ENCODE measurements at regions of chr10 and their contacts with region 1.

Region 1: GRCh38 chr10:97292097-97292862 is at the start of gene ARHGAP19:
- DNase-seq: peak; percentile 99
- ATAC-seq: peak; percentile 93
- H3K4me3 ChIP-seq: peak within 1 kb of the TSS; percentile 61 to 82 (median 69)
- H3K27ac ChIP-seq: peak within 1 kb of the TSS; percentile 97
- H3K4me1 ChIP-seq: peaks cover 30% of the 10 kb centered on the region
- H3K27me3 ChIP-seq: no peaks in the 10 kb centered on the region
- CTCF ChIP-seq: peak; percentile 61
- EP300 ChIP-seq: 0 out of 4 replicates have a peak, but pooled peaks of 1 of the 2 experiments have one; percentile 9
- POLR2A ChIP-seq: peak; percentile 85 to 89
- RAD21 ChIP-seq: peak; percentile 76
- total RNA-seq, gene ARHGAP19: 10.0 and 15.6 TPM in 2 replicates

Region 2: DNA sequence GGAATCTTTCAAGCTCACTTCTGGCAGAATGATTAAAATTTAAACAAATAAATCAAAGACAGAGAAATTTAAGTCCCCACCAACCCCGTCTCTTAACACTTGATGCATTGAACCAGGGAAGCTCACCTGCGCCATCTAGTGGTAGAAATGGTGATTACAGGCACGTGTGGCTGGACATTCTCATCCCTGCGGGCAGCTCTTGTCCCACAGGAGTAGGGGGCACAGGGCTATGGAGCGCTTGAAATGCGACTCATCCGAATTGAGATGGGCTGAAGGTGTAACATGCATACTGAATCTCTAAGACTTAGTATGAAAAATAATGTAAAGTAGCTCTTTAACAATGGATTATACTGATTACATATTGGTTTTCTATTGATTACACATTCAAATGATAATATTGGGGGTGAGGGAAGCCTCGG is 81.7 kb before region 1 on chr10:
- CTCF ChIA-PET with region 1: no interaction called
- POLR2A ChIA-PET with region 1: no interaction called
- in situ Hi-C with region 1: no loop called
- intact Hi-C with region 1: no loop called
- DNase-seq: peak; percentile 61
- ATAC-seq: peak; percentile 80
- H3K4me3 ChIP-seq: no peak overlapping the region
- H3K27ac ChIP-seq: no peak overlapping the region
- H3K4me1 ChIP-seq: peaks cover 8% of the 10 kb centered on the region
- H3K27me3 ChIP-seq: peaks cover 0 to 5% of the 10 kb centered on the region in 2 experiments; a peak in 2 of 5 replicates
- CTCF ChIP-seq: peak; percentile 89
- EP300 ChIP-seq: no peak
- POLR2A ChIP-seq: no peak
- RAD21 ChIP-seq: peak; percentile 84

Region 3: DNA sequence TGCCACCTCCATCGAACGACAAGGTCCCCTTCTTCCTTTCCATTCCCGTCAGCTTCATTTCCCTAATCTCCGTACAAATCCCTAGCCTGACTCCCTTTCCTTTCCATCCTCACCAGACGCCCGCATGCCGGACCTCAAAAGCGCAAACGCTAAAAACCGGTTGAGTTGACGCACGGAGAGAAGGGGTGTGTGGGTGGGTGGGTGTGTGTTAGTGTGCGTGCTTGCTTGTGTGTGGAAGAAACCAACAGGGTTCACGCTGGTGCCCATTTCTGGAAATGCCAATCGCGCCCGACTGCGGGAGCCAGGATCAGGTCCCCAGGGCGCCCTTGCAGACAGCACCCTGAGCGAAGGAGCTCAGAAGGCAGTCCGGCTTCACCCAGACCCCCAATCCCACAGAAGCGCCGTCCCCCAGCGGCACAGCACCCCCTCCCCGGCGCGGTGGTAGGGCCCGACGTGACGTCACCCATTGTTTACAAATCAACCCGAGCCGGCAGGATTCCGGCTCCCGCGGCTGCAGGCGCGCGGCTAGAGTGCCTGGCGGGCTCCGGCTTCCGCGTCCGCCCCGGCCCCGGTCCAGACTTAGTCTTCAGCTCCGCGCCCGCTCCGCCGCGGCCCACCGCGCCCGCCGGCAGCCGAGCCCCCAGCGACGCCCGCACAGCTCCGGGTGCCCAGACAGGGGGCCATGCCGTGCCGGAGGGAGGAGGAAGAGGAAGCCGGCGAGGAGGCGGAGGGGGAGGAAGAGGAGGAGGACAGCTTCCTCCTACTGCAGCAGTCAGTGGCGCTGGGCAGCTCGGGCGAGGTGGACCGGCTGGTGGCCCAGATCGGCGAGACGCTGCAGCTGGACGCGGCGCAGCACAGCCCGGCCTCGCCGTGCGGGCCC is 26.7 kb after region 1 on chr10 and contains the start of gene FRAT1:
- CTCF ChIA-PET with region 1: no interaction called
- POLR2A ChIA-PET with region 1: interaction called, 12 read pairs
- in situ Hi-C with region 1: no loop called
- intact Hi-C with region 1: no loop called
- DNase-seq: peak; percentile 74
- ATAC-seq: peak; percentile 82
- H3K4me3 ChIP-seq: peak within 1 kb of the TSS; percentile 75 to 84 (median 82)
- H3K27ac ChIP-seq: peak within 1 kb of the TSS; percentile 97
- H3K4me1 ChIP-seq: peaks cover 48% of the 10 kb centered on the region
- H3K27me3 ChIP-seq: peaks cover 0 to 2% of the 10 kb centered on the region in 2 experiments; a peak in 2 of 5 replicates
- CTCF ChIP-seq: no peak
- EP300 ChIP-seq: no peak; a peak in 1 of 4 replicates
- POLR2A ChIP-seq: peak; percentile 49 to 62; a peak in 3 of 4 replicates
- RAD21 ChIP-seq: peak; percentile 51
- total RNA-seq, gene FRAT1: 1.3 and 2.3 TPM in 2 replicates

Region 4: DNA sequence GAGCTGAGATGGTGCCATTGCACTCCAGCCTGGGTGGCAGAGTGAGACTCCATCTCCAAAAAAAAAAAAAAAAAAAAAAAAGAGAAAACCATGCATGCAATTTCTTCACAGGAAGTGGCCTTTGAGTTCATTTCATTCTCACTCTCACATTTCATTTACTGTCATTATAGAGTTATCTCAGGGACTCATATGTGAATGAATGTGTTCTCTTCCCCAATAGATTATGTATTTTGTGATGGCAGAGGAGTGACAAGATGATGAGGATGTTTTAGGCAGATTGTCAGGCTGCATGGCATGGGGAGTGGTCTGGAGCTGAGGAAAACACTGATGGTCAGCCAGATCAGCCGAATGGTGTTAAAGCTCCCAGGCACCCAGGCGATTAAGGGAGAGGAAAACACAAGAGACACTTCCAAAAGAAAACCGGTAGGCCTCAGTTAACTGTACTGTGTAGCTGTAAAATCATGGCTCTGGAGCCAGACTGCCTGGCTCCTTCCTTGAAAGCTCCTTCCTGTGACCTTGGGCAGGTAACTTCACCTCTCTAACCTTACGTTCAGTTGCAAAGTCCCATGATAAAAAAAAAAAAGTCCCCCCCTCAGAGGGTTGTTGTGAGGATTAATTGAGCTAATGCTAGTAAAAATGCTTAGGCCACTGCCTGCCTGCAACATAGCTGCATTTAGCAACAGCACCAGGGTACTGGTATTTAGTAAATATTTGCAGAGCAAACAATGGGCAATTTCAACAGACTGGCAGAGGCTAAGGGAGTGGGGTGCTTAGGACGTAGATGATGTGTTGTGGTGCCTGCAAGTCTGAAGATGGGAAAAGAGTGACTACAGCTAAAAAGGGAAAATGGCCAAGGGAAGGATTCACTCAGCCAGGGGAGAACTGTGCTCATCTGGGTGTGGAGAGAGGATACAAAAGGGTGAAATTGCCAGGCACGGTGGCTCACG is 35.3 kb after region 1 on chr10:
- CTCF ChIA-PET with region 1: interaction called, 5 read pairs
- POLR2A ChIA-PET with region 1: interaction called, 27 read pairs
- in situ Hi-C with region 1: loop called (anchors 5 kb)
- intact Hi-C with region 1: loop called (anchors 2 kb)
- DNase-seq: peak; percentile 96
- ATAC-seq: peak; percentile 87
- H3K4me3 ChIP-seq: peak overlapping the region in 1 of 3 experiments; percentile 59; a peak in 2 of 6 replicates
- H3K27ac ChIP-seq: peak overlapping the region; percentile 91
- H3K4me1 ChIP-seq: peaks cover 74% of the 10 kb centered on the region
- H3K27me3 ChIP-seq: no peaks in the 10 kb centered on the region
- CTCF ChIP-seq: no peak
- EP300 ChIP-seq: peak; percentile 84 to 96
- POLR2A ChIP-seq: no peak
- RAD21 ChIP-seq: peak; percentile 20; the same call in 1 of the 2 replicates

Region 5: DNA sequence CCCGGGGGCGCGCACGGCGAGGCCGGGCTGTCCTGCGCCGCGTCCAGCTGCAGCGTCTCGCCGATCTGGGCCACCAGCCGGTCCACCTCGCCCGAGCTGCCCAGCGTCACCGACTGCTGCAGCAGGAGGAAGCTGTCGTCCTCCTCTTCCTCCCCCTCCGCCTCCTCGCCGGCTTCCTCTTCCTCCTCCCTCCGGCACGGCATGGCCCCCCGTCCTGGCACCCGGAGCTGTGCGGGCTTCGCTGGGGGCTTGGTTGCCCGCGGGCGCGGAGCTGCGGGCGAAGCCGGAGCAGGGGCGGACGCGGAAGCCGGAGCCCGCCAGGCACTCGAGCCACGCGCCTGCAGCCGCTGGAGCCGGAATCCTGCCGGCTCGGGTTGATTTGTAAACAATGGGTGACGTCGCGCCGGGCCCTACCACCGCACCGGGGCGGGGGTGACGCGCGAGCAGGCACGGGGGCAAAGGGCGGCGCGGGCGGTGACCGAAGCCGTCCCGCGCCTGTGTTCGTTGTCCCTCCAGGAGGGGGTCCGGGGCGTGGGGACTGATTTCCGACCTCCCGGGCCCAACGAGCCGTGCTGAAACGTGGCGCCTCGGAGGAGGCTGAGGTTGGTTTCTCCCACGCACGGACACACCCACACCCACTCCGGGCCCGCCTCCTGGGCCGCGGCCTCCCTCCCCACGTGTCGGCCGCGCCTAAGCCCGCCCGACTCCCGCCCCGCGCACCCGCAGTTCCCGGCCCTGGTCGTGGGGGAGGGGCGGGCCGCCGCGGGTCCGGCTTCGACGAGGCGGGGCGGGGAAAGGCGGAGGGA is 42.3 kb after region 1 on chr10 and contains the start of gene FRAT2:
- CTCF ChIA-PET with region 1: interaction called, 5 read pairs
- POLR2A ChIA-PET with region 1: interaction called, 27 read pairs
- in situ Hi-C with region 1: loop called (anchors 5 kb)
- intact Hi-C with region 1: loop called (anchors 1 kb)
- DNase-seq: peak; percentile 74
- ATAC-seq: peak; percentile 76
- H3K4me3 ChIP-seq: peak within 1 kb of the TSS; percentile 65 to 87 (median 82)
- H3K27ac ChIP-seq: peak within 1 kb of the TSS; percentile 85
- H3K4me1 ChIP-seq: peaks cover 52% of the 10 kb centered on the region
- H3K27me3 ChIP-seq: no peaks in the 10 kb centered on the region
- CTCF ChIP-seq: no peak
- EP300 ChIP-seq: peak; percentile 39 to 53; a peak in 1 of 4 replicates
- POLR2A ChIP-seq: peak; percentile 80 to 86
- RAD21 ChIP-seq: peak; percentile 66
- total RNA-seq, gene FRAT2: 10.1 and 14.1 TPM in 2 replicates

Region 6: GRCh38 chr10:97400665-97401454 is 108.6 kb after region 1 on chr10 and contains the start of gene RRP12:
- CTCF ChIA-PET with region 1: no interaction called
- POLR2A ChIA-PET with region 1: interaction called, 13 read pairs
- in situ Hi-C with region 1: no loop called
- intact Hi-C with region 1: loop called (anchors 5 kb)
- DNase-seq: peak; percentile 99
- ATAC-seq: peak; percentile 92
- H3K4me3 ChIP-seq: peak within 1 kb of the TSS; percentile 72 to 92 (median 87)
- H3K27ac ChIP-seq: peak within 1 kb of the TSS; percentile 83
- H3K4me1 ChIP-seq: peaks cover 13% of the 10 kb centered on the region; the same call in 1 of the 2 replicates
- H3K27me3 ChIP-seq: no peaks in the 10 kb centered on the region; a peak in 1 of 5 replicates
- CTCF ChIP-seq: no peak; the same call in 1 of the 2 replicates
- EP300 ChIP-seq: no peak
- POLR2A ChIP-seq: peak; percentile 61 to 81; a peak in 3 of 4 replicates
- RAD21 ChIP-seq: no peak; the same call in 1 of the 2 replicates
- total RNA-seq, gene RRP12: 30.6 and 39.4 TPM in 2 replicates

Measured in HepG2 (cell line).